Common myeloid progenitor, CD34-positive (primary cell): ENCODE measurements at regions of chr18 and their contacts with region 1.

Region 1: GRCh38 chr18:24878289-24878688 is 417.9 kb downstream of the HRH4 start:
- DNase-seq: peak; percentile 56 to 80 (median 72)
- H3K4me3 ChIP-seq: no peak overlapping the region
- H3K27ac ChIP-seq: no peak overlapping the region
- H3K4me1 ChIP-seq: peaks cover 0 to 4% (median 2%) of the 10 kb centered on the region in 4 experiments
- H3K27me3 ChIP-seq: no peaks in the 10 kb centered on the region

Region 2: GRCh38 chr18:25832001-25832604 is 953.8 kb after region 1 on chr18:
- CTCF ChIA-PET with region 1: interaction called, 16 read pairs
- POLR2A ChIA-PET with region 1: no interaction called
- DNase-seq: peak; percentile 27 to 40 (median 35)
- H3K4me3 ChIP-seq: no peak overlapping the region
- H3K27ac ChIP-seq: no peak overlapping the region
- H3K4me1 ChIP-seq: no peaks in the 10 kb centered on the region
- H3K27me3 ChIP-seq: no peaks in the 10 kb centered on the region